Naive thymus-derived CD4-positive, alpha-beta T cell (primary cell): ENCODE measurements at regions of chr1 and their contacts with region 1.

Region 1: DNA sequence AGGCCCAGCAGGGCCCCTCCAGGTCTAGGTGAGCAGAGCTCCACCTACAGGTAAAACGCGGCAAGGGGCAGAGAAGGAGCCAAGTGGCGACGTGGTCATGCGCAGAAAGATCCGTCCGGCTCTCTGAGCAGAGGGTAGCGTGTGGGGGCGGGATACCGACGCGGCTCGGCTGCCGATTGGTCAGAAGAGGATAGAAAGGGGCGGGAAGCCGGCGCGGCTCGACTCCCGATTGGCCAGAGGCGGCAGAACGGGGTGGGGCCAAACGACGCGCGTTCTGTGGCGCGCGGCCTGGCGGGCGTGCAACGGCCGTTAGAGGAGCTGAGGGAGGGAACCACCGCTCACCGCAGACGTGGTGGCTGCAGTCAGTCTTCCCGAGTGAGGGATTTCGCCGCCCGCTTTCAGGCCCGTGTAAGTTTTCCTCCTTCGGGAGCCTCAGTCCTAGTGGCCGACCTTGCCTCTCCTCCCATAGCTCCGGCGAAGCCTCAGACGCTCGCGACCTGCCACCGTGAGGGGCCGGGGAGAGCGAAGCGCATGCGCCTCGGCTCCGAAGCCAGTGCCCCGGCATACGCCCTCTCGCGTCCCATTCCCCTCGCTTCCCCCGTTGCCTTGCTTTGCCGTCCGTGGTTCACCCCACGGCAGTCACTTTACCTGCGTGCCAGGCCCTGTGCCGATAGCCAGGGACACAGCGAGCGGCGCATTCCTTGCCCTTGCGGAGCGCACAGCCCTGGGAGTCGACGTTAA is at the start of gene CEP85:
- DNase-seq: peak; percentile 93 to 99 (median 98)
- ATAC-seq: peak; percentile 96
- H3K4me3 ChIP-seq: peak within 1 kb of the TSS; percentile 91
- H3K4me3 Mint-ChIP-seq: peak within 1 kb of the TSS; percentile 89 to 99 (median 99)
- H3K27ac ChIP-seq: peak within 1 kb of the TSS; percentile 93
- H3K27ac Mint-ChIP-seq: peak within 1 kb of the TSS; percentile 87 to 99 (median 96)
- H3K4me1 ChIP-seq: peaks cover 4 to 13% of the 10 kb centered on the region in 2 donors
- H3K4me1 Mint-ChIP-seq: peaks cover 26 to 39% (median 38%) of the 10 kb centered on the region in 7 donors
- H3K27me3 ChIP-seq: no peaks in the 10 kb centered on the region
- H3K27me3 Mint-ChIP-seq: peaks cover 0 to 8% (median 0%) of the 10 kb centered on the region in 5 donors
- total RNA-seq, gene CEP85: 12.1 to 34.8 (median 20.7) TPM

Region 2: GRCh38 chr1:25715888-25716287 is 518.2 kb before region 1 on chr1:
- CTCF ChIA-PET with region 1: no interaction called
- POLR2A ChIA-PET with region 1: no interaction called
- intact Hi-C with region 1: no loop called
- DNase-seq: no peak
- ATAC-seq: no peak
- H3K4me3 ChIP-seq: no peak overlapping the region
- H3K4me3 Mint-ChIP-seq: no peak overlapping the region
- H3K27ac ChIP-seq: peak overlapping the region; percentile 3
- H3K27ac Mint-ChIP-seq: peak overlapping the region in 8 of 9 donors; percentile 45 to 84 (median 58)
- H3K4me1 ChIP-seq: peaks cover 8 to 46% of the 10 kb centered on the region in 2 donors
- H3K4me1 Mint-ChIP-seq: peaks cover 18 to 80% (median 73%) of the 10 kb centered on the region in 7 donors
- H3K27me3 ChIP-seq: no peaks in the 10 kb centered on the region
- H3K27me3 Mint-ChIP-seq: peaks cover 0 to 21% (median 0%) of the 10 kb centered on the region in 5 donors

Region 3: GRCh38 chr1:26102526-26102925 is 131.5 kb before region 1 on chr1:
- CTCF ChIA-PET with region 1: interaction called, 4 read pairs
- POLR2A ChIA-PET with region 1: interaction called, 3 read pairs
- intact Hi-C with region 1: loop called in 1 of 2 experiments (anchors 1 kb)
- DNase-seq: no peak
- ATAC-seq: no peak
- H3K4me3 ChIP-seq: no peak overlapping the region
- H3K4me3 Mint-ChIP-seq: no peak overlapping the region
- H3K27ac ChIP-seq: no peak overlapping the region
- H3K27ac Mint-ChIP-seq: no peak overlapping the region
- H3K4me1 ChIP-seq: no peaks in the 10 kb centered on the region
- H3K4me1 Mint-ChIP-seq: peaks cover 0 to 13% (median 6%) of the 10 kb centered on the region in 7 donors
- H3K27me3 ChIP-seq: no peaks in the 10 kb centered on the region
- H3K27me3 Mint-ChIP-seq: peaks cover 0 to 27% (median 0%) of the 10 kb centered on the region in 5 donors

Region 4: DNA sequence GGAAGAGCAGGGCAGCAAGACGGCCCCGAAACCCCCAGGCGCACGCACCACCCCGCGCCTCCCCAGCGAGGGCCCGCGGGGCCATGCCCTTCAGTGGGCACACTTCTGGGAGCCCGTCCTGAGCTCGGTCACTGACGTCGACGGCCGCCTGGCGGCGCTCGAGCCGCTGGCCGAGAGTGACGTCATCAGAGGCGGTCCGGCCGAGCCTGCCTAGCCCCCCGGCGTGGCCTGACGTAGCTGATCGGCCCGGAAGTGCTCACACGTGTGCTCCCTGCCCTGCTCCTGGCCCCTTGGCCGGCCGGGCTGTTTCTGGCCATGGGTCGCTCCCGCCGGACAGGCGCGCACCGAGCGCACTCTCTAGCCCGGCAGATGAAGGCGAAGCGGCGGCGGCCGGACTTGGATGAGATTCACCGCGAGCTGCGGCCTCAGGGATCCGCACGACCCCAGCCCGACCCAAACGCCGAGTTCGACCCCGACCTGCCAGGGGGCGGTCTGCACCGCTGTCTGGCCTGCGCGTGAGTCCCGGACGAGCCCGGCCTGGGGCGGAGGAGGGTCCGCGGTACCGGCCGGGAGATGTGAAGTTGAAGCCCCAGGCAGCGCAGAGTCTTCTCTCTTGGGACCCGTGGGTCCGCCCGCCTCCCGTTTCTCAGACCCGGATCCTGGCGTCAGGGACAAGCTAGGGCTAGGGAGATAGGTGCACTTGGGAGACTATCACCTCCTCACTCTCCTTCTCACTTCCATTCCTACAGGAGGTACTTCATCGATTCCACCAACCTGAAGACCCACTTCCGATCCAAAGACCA is 64.2 kb before region 1 on chr1 and contains the start of gene ZNF593:
- CTCF ChIA-PET with region 1: interaction called, 38 read pairs
- POLR2A ChIA-PET with region 1: interaction called, 24 read pairs
- intact Hi-C with region 1: loop called (anchors 1 kb)
- DNase-seq: peak; percentile 52 to 92 (median 69)
- ATAC-seq: peak; percentile 96
- H3K4me3 ChIP-seq: peak within 1 kb of the TSS; percentile 72
- H3K4me3 Mint-ChIP-seq: peak within 1 kb of the TSS; percentile 83 to 90 (median 88)
- H3K27ac ChIP-seq: peak within 1 kb of the TSS; percentile 86
- H3K27ac Mint-ChIP-seq: peak within 1 kb of the TSS; percentile 48 to 91 (median 77)
- H3K4me1 ChIP-seq: peaks cover 7 to 10% of the 10 kb centered on the region in 2 donors
- H3K4me1 Mint-ChIP-seq: peaks cover 0 to 33% (median 15%) of the 10 kb centered on the region in 7 donors
- H3K27me3 ChIP-seq: no peaks in the 10 kb centered on the region
- H3K27me3 Mint-ChIP-seq: peaks cover 0 to 21% (median 0%) of the 10 kb centered on the region in 5 donors
- total RNA-seq, gene ZNF593: 7.8 to 36.3 (median 9.6) TPM

Region 5: GRCh38 chr1:26218906-26219494 is 15.1 kb before region 1 on chr1:
- CTCF ChIA-PET with region 1: no interaction called
- POLR2A ChIA-PET with region 1: no interaction called
- intact Hi-C with region 1: no loop called
- DNase-seq: no peak
- ATAC-seq: no peak
- H3K4me3 ChIP-seq: no peak overlapping the region
- H3K4me3 Mint-ChIP-seq: no peak overlapping the region
- H3K27ac ChIP-seq: no peak overlapping the region
- H3K27ac Mint-ChIP-seq: no peak overlapping the region
- H3K4me1 ChIP-seq: no peaks in the 10 kb centered on the region
- H3K4me1 Mint-ChIP-seq: peaks cover 0 to 2% (median 0%) of the 10 kb centered on the region in 7 donors
- H3K27me3 ChIP-seq: no peaks in the 10 kb centered on the region
- H3K27me3 Mint-ChIP-seq: peaks cover 0 to 19% (median 0%) of the 10 kb centered on the region in 5 donors

Region 6: DNA sequence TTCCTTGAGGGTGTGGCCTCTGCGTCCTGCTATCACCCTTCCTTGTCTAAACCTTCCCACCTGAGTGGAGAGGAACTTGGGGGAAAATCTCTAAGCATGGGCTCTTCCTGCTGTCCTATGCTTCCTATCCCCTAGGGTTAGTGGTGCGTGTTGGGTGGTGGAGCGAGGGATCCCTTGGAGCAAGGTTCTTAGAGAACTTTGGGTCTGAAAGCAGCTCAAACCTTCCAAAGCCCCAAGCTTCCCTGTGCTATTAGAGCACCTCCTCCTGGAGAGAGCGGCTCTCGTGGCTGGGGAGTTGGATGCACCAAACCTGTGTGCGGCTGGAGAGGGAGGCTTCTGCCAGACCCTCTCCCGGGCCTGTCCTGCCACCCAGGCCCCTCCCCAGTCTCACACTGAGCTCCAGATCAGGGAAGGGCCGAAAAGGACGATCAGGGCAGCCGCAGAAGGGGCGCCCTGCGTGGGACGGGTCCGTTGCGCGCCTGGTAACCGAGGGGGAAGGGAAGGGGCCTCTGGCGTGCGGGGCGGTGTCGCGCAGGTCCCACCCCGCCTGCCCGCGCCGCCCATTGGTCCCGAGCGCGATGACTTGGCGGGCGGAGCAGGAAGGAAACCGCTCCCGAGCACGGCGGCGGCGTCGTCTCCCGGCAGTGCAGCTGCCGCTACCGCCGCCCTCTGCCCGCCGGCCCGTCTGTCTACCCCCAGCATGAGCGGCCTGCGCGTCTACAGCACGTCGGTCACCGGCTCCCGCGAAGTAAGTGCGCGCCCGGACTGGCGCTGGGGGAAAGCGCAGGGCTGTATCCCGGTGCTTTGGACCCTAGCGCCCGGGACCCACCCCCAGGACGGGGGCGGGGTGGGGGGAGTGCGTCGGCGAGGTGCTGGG is 45.6 kb after region 1 on chr1 and contains the start of gene SH3BGRL3:
- CTCF ChIA-PET with region 1: interaction called, 5 read pairs
- POLR2A ChIA-PET with region 1: interaction called, 13 read pairs
- intact Hi-C with region 1: loop called (anchors 1 to 2 kb)
- DNase-seq: peak; percentile 73 to 89 (median 84)
- ATAC-seq: peak; percentile 77
- H3K4me3 ChIP-seq: peak within 1 kb of the TSS; percentile 58
- H3K4me3 Mint-ChIP-seq: peak within 1 kb of the TSS; percentile 80 to 98 (median 89)
- H3K27ac ChIP-seq: peak within 1 kb of the TSS; percentile 86
- H3K27ac Mint-ChIP-seq: peak within 1 kb of the TSS; percentile 83 to 99 (median 93)
- H3K4me1 ChIP-seq: peaks cover 80 to 82% of the 10 kb centered on the region in 2 donors
- H3K4me1 Mint-ChIP-seq: peaks cover 60 to 85% (median 71%) of the 10 kb centered on the region in 7 donors
- H3K27me3 ChIP-seq: no peaks in the 10 kb centered on the region
- H3K27me3 Mint-ChIP-seq: no peaks in the 10 kb centered on the region
- total RNA-seq, gene SH3BGRL3: 156 to 636 (median 224) TPM

Region 7: GRCh38 chr1:26378088-26378878 is 144.2 kb after region 1 on chr1:
- CTCF ChIA-PET with region 1: no interaction called
- POLR2A ChIA-PET with region 1: no interaction called
- intact Hi-C with region 1: loop called in 1 of 2 experiments (anchors 1 kb)
- DNase-seq: peak; percentile 47 to 77 (median 70)
- ATAC-seq: peak; percentile 98
- H3K4me3 ChIP-seq: peak overlapping the region; percentile 35
- H3K4me3 Mint-ChIP-seq: peak overlapping the region; percentile 64 to 85 (median 74)
- H3K27ac ChIP-seq: peak overlapping the region; percentile 56
- H3K27ac Mint-ChIP-seq: peak overlapping the region; percentile 48 to 93 (median 92)
- H3K4me1 ChIP-seq: peaks cover 57 to 64% of the 10 kb centered on the region in 2 donors
- H3K4me1 Mint-ChIP-seq: peaks cover 57 to 74% (median 70%) of the 10 kb centered on the region in 7 donors
- H3K27me3 ChIP-seq: no peaks in the 10 kb centered on the region
- H3K27me3 Mint-ChIP-seq: no peaks in the 10 kb centered on the region